Mammary epithelial cell (primary cell): ENCODE measurements at regions of chr5 and their contacts with region 1.

Region 1: DNA sequence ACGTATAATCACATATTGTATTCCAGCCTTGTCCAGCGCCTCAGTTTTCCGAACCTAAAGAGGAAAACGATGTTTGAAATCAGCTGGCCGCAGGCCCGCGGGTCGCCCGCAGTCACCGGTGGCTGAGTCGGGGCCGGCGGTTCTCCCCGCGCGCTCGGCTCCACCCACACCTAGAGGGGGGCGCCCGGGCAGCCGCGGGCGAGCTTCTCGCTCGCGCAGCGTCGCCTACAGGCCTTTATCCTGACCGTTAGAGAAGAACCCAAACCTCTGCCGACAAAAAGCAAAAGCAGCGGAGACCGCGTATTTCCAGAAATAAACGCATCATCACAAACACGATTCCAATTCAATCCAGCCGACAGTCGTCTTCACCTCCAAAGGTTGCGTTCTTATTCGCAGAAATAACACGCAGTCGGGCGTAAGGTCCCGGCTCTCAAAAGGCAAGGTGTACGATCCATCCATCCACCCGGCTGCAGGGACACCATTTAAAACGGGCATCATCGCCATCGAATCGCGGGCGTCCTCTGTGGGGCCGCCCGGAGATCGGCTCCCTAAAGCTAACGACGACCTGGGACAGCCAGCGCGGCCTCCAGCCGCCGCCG is 680 bp upstream of the NIPBL start:
- DNase-seq: peak; percentile 72
- H3K4me3 ChIP-seq: peak overlapping the region; percentile 69 to 90 (median 88)
- H3K27ac ChIP-seq: peak overlapping the region; percentile 78
- H3K4me1 ChIP-seq: peaks cover 6% of the 10 kb centered on the region
- H3K27me3 ChIP-seq: no peaks in the 10 kb centered on the region
- CTCF ChIP-seq: peak; percentile 18 to 53

Region 2: GRCh38 chr5:36444582-36445418 is 431.1 kb before region 1 on chr5:
- CTCF ChIA-PET with region 1: no interaction called
- dilution Hi-C with region 1: no loop called
- in situ Hi-C with region 1: no loop called
- intact Hi-C with region 1: loop called (anchors 10 kb)
- DNase-seq: no peak
- H3K4me3 ChIP-seq: no peak overlapping the region
- H3K27ac ChIP-seq: no peak overlapping the region
- H3K4me1 ChIP-seq: peaks cover 40% of the 10 kb centered on the region
- H3K27me3 ChIP-seq: no peaks in the 10 kb centered on the region
- CTCF ChIP-seq: no peak

Region 3: GRCh38 chr5:36944607-36945225 is 68.8 kb after region 1 on chr5:
- CTCF ChIA-PET with region 1: interaction called, 3 read pairs
- dilution Hi-C with region 1: no loop called
- in situ Hi-C with region 1: no loop called
- intact Hi-C with region 1: loop called (anchors 1 kb)
- DNase-seq: peak; percentile 39
- H3K4me3 ChIP-seq: no peak overlapping the region
- H3K27ac ChIP-seq: no peak overlapping the region
- H3K4me1 ChIP-seq: peaks cover 9% of the 10 kb centered on the region
- H3K27me3 ChIP-seq: no peaks in the 10 kb centered on the region
- CTCF ChIP-seq: peak; percentile 51 to 52

Region 4: DNA sequence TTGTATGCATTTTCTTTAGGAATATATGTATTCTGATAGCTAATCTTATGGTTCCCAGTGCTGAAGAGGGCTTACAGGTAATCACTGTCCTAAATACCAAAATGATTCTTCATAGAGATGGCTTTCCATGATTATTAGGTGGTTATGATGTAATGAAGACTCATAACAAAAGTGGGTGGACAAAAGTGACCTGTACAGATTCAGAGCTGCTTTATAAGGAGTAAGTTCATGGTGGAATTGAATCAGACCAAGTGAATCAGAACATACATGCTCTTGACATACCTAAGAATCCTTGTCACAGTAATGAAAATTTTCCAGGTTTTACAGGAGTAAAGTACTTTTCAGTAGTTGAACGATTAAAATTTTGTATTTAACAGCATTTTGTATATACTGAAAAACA is 106.3 kb after region 1 on chr5:
- CTCF ChIA-PET with region 1: no interaction called
- dilution Hi-C with region 1: no loop called
- in situ Hi-C with region 1: no loop called
- intact Hi-C with region 1: loop called (anchors 2 kb)
- DNase-seq: peak; percentile 87
- H3K4me3 ChIP-seq: no peak overlapping the region
- H3K27ac ChIP-seq: peak overlapping the region; percentile 29
- H3K4me1 ChIP-seq: peaks cover 6% of the 10 kb centered on the region
- H3K27me3 ChIP-seq: no peaks in the 10 kb centered on the region
- CTCF ChIP-seq: no peak